Calu3 (cell line): ENCODE measurements at regions of chr19 and their contacts with region 1.

Region 1: GRCh38 chr19:47094557-47095475 is 18.8 kb downstream of the ZC3H4 start:
- DNase-seq: peak; percentile 36
- H3K4me3 Mint-ChIP-seq: peak overlapping the region; percentile 65
- H3K27ac Mint-ChIP-seq: peak overlapping the region; percentile 95
- H3K4me1 Mint-ChIP-seq: peaks cover 71% of the 10 kb centered on the region
- H3K27me3 Mint-ChIP-seq: no peaks in the 10 kb centered on the region
- CTCF ChIP-seq: no peak

Region 2: GRCh38 chr19:47058621-47059020 is 36.2 kb before region 1 on chr19:
- CTCF ChIA-PET with region 1: no interaction called
- intact Hi-C with region 1: no loop called
- DNase-seq: no peak
- H3K4me3 Mint-ChIP-seq: no peak overlapping the region
- H3K27ac Mint-ChIP-seq: no peak overlapping the region
- H3K4me1 Mint-ChIP-seq: no peaks in the 10 kb centered on the region
- H3K27me3 Mint-ChIP-seq: peaks cover 16% of the 10 kb centered on the region
- CTCF ChIP-seq: no peak

Region 3: DNA sequence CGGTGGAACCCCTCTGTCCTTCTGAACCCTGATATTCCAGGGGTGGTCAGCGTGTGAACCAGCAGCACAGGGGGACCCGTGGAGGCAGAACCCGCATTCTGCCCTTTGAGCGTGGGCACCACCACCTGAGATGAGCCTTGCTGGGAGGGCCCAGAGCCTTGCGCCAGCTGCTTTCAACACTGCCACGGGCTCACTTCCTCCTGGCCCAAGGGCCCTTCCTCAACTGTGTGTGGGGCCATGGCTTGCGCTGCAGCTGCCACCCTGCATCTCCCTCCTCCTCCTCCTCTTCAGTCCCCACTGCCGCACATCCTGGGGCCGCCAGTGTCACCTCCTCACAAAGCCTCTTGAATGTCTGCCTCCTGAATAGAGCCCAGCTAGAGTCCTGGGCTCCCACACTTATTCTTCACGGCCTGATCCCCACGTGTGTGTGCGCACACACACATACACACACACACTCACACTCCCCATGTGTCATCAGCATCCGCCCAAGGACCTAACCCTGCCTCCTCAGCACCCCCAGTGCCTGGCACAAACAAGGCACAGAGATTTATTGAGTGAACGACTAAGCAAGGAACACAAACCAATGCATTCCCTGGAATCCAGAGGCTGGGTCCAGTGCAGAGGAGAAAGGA is 19.5 kb before region 1 on chr19:
- CTCF ChIA-PET with region 1: interaction called, 24 read pairs
- intact Hi-C with region 1: no loop called
- DNase-seq: no peak
- H3K4me3 Mint-ChIP-seq: no peak overlapping the region
- H3K27ac Mint-ChIP-seq: no peak overlapping the region
- H3K4me1 Mint-ChIP-seq: no peaks in the 10 kb centered on the region
- H3K27me3 Mint-ChIP-seq: no peaks in the 10 kb centered on the region
- CTCF ChIP-seq: no peak

Region 4: DNA sequence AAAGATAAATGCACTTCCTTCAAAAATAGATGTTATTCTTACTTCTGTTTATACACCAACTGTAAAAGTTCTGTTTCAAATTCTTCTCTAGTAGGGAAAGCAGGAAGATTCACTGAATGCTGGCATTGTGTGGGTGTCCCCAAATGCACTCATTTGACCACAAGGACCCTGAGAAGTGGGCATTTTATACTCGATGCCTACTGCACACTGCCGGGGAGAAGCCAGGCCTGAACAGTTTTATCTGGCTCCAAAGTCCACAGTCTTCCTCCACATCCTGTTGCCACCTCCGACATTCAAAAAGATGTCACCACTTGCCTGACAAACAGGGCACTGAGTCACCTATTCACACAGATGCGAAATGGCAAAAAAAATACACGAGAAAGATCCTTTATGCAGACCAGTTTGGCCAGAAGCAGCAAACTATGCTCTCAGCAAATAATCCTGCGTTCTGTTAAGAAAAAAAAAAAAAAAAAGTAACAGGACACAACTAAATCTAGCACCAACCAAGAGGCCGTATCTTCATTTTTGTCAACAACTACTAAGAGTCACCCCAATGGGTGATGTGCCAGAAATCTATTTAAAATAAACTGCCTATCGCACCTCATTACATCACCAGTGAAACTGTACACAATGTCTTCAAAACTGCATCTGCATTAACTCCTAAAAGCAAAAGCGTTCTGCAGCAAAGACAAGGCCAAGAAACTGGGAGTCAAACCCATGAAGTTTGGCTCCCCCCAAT is 12.6 kb after region 1 on chr19:
- CTCF ChIA-PET with region 1: interaction called, 22 read pairs
- intact Hi-C with region 1: loop called (anchors 1 kb)
- DNase-seq: peak; percentile 71
- H3K4me3 Mint-ChIP-seq: peak overlapping the region; percentile 75
- H3K27ac Mint-ChIP-seq: peak overlapping the region; percentile 97
- H3K4me1 Mint-ChIP-seq: peaks cover 55% of the 10 kb centered on the region
- H3K27me3 Mint-ChIP-seq: no peaks in the 10 kb centered on the region
- CTCF ChIP-seq: no peak

Region 5: DNA sequence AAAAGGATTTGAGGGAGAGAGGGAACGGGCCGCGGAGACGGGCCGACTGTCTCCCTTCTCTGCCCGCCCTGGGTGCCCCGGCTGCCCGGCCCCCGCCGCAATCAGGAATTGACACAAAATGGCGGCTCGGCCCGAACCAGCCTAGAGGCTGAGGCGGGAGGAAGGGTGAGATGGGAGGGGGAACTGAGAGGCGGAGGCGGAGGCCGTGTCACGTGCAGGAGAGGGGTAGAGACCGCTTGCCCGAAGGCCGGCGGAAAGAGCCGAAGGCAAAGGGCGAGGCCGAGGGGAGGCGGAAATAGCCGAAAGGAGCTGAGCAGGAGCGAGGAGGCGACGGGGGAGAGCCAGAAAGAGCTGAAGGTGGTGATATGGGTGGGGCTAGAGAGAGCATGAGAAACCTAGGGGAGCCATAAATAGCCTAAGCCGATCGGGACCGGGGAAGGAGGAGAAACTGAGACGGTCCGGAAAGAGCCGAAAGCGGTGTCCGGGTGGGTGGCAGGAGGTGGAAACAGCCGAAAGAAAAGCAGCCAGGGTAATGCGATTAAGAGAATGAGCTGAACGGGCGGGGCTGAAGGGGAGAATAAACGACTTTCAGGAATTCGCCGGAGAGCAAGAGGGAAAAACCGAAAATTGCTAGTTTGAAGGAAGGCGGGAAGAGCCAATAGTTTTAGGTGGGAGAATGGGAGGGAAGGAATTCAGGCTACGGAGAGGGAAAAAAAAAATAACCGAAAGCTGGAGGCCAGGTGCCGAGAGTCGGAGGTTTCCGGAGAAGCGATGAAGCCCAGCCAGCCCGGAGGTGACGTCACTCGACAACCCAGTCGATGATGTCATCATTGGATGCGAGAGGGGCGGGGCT is 18.4 kb after region 1 on chr19 and contains the start of gene ZC3H4:
- CTCF ChIA-PET with region 1: interaction called, 22 read pairs
- intact Hi-C with region 1: no loop called
- DNase-seq: peak; percentile 100
- H3K4me3 Mint-ChIP-seq: peak within 1 kb of the TSS; percentile 75
- H3K27ac Mint-ChIP-seq: peak within 1 kb of the TSS; percentile 97
- H3K4me1 Mint-ChIP-seq: peaks cover 33% of the 10 kb centered on the region
- H3K27me3 Mint-ChIP-seq: no peaks in the 10 kb centered on the region
- CTCF ChIP-seq: no peak
- total RNA-seq, gene ZC3H4: 73.0 and 85.2 TPM in 2 replicates